Ascending aorta (tissue), 2 donors: ENCODE measurements at regions of chr3 and their contacts with region 1.

Region 1: DNA sequence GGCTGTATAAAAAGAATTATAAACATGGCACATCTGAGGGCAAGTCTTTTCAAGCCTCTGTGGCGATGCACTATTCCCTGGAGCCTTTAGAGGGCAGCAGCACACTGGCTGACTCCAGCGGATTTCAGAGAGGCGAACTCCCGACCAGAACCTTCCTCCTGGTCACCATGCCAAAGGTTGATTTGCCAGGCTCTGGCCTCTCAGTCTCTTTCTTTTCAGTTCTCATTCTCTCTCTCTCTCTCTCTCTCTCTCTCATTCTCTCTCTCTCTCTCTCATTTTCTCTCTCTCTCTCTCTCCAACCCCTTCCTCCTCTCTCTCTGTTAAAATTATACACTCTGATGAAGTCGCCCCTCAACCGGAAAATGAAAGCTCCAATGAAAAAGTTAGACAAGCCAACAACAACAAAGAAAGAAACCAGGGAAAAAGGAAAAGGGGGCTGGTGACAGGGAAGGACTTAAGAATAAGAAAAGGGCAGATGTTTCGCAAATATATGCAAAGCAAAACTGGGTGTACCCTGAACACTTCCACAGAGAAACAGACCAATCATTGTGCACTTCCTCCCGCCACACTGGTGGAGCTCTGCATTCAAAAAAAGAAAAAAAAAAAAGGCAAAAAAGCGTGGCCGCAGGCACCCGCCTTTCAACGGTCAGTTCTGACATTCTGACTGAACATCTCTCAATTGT is 90.2 kb downstream of the TIGIT start:
- DNase-seq: peak; percentile 25 to 90
- H3K4me3 ChIP-seq: peak overlapping the region; percentile 42 to 66
- H3K27ac ChIP-seq: peak overlapping the region; percentile 72 to 74
- H3K4me1 ChIP-seq: peaks cover 0 to 17% of the 10 kb centered on the region in 2 donors
- H3K27me3 ChIP-seq: no peaks in the 10 kb centered on the region
- CTCF ChIP-seq: peak; percentile 75 to 97 (median 92)

Region 2: DNA sequence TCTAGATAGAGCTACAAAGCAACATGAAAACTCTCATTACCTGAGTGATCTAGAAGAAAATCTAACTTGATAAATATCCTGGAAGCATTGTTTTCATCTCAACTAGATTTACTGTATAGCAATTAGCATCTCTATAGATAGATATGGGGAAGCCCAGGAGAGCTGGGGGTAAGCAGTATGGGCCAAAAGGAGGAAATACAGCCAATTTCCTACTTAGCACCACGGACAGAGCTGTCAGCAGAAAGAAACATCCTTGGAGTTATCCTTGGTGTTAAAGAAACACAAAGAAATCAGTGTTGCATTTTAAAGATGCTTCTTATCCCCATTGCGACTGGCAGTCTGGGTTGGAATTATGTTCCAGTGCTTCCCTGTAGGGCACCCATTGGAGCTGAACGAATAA is 36.1 kb after region 1 on chr3:
- intact Hi-C with region 1: loop called (anchors 2 kb)
- DNase-seq: no peak
- H3K4me3 ChIP-seq: no peak overlapping the region
- H3K27ac ChIP-seq: no peak overlapping the region
- H3K4me1 ChIP-seq: no peaks in the 10 kb centered on the region
- H3K27me3 ChIP-seq: no peaks in the 10 kb centered on the region
- CTCF ChIP-seq: no peak

Region 3: DNA sequence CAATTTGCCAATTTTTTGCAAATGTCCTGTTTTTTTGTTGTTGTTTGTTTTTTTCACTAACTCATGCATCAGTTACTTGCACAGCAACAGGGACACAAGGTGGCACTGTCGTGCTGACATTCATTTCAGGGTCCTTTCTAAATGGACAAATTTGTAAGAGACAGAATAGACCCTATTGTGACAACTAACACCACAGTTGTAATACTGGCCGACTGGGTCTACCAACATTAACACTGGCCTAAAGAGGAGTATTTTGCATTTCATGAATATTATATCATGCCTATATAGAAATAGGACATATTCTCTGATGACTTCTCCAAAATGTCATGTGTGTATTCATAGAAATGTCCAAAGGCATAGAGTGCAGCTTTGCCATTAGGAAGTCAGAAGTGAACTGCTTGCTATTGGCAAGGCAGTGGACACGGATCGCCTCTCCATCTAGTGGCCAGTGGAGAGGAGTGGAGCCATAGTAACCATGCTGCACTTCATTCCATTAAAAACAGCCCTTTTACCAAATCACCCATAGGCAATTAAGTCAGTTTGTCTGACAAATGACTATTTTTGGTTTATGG is 708.3 kb after region 1 on chr3:
- intact Hi-C with region 1: loop called (anchors 1 kb)
- DNase-seq: peak in 1 of 2 donors; percentile 74
- H3K4me3 ChIP-seq: no peak overlapping the region
- H3K27ac ChIP-seq: no peak overlapping the region
- H3K4me1 ChIP-seq: peaks cover 0 to 8% of the 10 kb centered on the region in 2 donors
- H3K27me3 ChIP-seq: no peaks in the 10 kb centered on the region
- CTCF ChIP-seq: peak; percentile 1 to 55 (median 52)

Region 4: GRCh38 chr3:115704661-115705338 is 1320.8 kb after region 1 on chr3:
- intact Hi-C with region 1: loop called (anchors 10 kb)
- DNase-seq: no peak
- H3K4me3 ChIP-seq: no peak overlapping the region
- H3K27ac ChIP-seq: peak overlapping the region; percentile 41 to 62
- H3K4me1 ChIP-seq: peaks cover 0 to 5% of the 10 kb centered on the region in 2 donors
- H3K27me3 ChIP-seq: no peaks in the 10 kb centered on the region
- CTCF ChIP-seq: no peak

Region 5: DNA sequence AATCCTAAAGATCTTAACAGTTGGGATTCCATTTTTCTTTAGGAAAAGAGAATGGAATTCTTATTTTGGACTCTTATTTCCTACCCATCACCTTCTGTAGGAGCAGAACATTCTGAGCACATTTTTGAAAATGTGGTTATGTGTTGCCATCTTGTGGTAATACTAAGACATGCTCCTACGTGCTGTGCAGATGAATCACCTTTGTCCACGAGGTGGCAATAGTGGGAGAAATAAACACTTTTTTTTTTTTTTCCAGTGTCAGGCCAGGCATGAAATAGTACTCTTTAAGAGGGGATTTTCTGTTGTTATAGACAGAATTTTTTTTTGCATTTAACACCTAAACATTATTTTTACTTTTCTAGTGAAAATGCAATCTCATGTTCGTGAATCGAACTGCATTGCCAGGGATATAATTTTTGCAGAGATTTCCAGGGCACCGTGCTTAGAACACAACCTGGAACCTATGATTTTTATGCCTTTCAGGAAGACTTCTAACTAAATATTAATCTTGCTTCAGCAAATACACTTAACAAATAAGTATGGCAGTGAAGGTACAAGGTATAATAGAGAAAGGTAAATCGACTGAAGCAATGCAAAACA is 1435.9 kb after region 1 on chr3:
- intact Hi-C with region 1: loop called (anchors 10 kb)
- DNase-seq: peak; percentile 11 to 83
- H3K4me3 ChIP-seq: no peak overlapping the region
- H3K27ac ChIP-seq: no peak overlapping the region
- H3K4me1 ChIP-seq: no peaks in the 10 kb centered on the region
- H3K27me3 ChIP-seq: no peaks in the 10 kb centered on the region
- CTCF ChIP-seq: peak; percentile 68 to 94 (median 89)